Activated CD8-positive, alpha-beta memory T cell treated with anti-CD3 and anti-CD28 coated beads, Interleukin-2, amount 10 ng/mL, durations not matched to agents 7 days and 5 days (primary cell): ENCODE measurements at regions of chr7 and their contacts with region 1.

Region 1: DNA sequence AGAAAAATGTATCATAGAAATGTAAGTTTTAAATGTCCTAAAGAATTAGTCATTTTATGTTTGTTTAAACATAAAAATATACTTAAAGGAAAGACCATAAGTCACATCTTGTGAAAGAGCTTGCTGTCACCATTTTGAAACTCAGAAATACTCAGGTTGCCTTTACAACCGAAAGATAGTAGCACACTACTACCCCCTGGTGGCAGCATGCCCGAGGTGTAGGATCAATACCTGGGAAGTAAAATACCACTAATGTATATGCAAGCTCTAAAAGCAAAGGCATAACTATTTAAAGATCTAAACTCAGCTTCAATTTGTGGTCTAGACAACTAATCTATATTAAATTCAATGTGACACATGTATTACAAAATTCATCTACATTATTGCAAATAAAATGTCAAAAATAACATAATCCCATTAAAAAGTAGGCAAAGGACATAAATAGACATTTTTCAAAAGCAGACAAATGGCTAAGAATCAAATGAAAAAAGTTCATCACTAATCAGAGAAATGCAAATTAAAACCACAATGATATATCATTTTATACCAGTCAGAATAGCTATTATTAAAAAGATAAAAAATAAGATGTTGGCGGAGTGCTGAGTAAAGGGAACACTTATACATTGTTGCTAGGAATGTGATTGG is 47.7 kb upstream of the FGL2 start:
- DNase-seq: peak; percentile 94
- ATAC-seq: peak; percentile 99
- H3K4me3 Mint-ChIP-seq: no peak overlapping the region
- H3K27ac Mint-ChIP-seq: no peak overlapping the region
- H3K4me1 Mint-ChIP-seq: peaks cover 5% of the 10 kb centered on the region
- H3K27me3 Mint-ChIP-seq: peaks cover 2% of the 10 kb centered on the region

Region 2: GRCh38 chr7:77199013-77199966 is 48.0 kb before region 1 on chr7 and contains the start of gene FGL2:
- CTCF ChIA-PET with region 1: interaction called, 15 read pairs
- DNase-seq: peak; percentile 56
- ATAC-seq: peak; percentile 68
- H3K4me3 Mint-ChIP-seq: peak within 1 kb of the TSS; percentile 82
- H3K27ac Mint-ChIP-seq: peak within 1 kb of the TSS; percentile 86
- H3K4me1 Mint-ChIP-seq: peaks cover 60% of the 10 kb centered on the region
- H3K27me3 Mint-ChIP-seq: no peaks in the 10 kb centered on the region
- total RNA-seq, gene FGL2: 9.4 to 9.9 TPM

Region 3: DNA sequence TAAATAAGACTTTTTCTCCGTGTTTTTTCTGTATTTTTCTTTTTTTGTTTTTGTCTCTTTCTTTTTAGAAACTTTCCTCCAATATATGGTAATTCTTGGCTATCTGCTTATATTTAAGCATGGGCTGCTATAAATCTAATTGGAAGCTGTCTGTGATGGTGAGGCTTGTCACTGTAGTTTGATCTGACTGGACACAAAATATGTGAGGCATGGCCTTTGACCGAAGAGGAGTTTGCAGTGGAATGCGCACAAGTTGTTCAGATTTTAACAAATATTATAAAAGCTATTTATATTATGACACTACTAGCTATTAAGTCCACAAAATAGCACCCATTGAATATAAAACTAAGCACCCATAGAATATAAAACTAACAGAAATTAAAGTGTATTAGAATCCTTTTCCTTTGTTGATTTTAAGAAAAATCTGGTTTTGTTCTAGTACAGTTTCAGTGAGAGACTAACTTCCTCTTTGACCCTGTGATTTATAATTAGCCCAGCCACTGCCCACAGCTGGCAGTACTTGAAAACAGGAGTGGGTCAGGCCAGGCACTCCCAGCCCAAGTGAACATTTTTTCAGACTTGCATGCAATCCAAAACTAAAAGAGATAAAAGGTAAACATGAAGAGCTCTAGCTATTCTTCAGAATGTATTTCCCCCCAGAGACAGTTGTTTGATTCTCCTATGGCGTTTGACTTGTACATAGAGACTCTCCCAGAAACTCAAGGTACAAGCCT is 22.2 kb after region 1 on chr7:
- CTCF ChIA-PET with region 1: interaction called, 11 read pairs
- DNase-seq: no peak
- ATAC-seq: no peak
- H3K4me3 Mint-ChIP-seq: no peak overlapping the region
- H3K27ac Mint-ChIP-seq: no peak overlapping the region
- H3K4me1 Mint-ChIP-seq: peaks cover 31% of the 10 kb centered on the region
- H3K27me3 Mint-ChIP-seq: no peaks in the 10 kb centered on the region

Region 4: DNA sequence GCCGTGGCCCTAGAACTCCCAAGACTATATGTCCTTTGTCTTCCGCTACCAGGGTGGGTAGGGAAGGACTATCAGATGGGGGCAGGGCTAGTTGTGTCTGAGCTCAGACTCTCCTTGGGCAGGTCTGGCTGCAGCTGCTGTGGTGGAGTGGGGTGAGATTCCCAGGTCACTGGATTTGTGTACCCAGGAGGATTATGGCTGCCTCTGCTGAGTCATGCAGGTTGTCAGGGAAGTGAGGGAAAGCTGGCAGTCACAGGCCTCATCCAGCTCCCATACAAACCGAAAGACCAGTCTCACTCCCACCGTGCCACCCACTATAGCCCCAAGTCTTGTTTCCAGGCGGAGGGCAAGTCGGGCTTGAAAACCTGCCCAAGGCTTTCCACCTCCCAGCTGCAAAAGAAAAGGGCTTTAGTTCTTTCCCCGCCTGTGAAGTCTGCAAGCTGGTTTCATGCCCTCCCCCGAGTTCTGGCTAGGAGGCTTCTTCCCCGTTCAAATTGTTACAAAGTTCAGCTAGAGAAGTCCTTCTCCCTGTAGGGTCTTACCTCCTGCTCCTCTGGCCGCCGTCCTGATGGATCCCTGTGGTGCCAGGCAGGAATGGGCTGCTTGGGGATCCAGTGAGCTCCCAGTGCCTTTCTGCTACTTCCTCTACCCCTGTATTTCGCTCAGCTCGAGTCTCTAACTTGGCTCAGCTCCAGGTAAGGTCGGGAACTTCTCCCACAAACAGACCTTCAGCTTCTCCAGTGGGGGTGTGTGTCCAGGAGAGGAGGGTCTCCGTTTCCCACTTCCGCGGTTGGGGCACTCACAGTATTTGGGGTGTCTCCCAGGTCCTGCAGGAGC is 59.1 kb after region 1 on chr7:
- CTCF ChIA-PET with region 1: no interaction called
- DNase-seq: no peak
- ATAC-seq: no peak
- H3K4me3 Mint-ChIP-seq: no peak overlapping the region
- H3K27ac Mint-ChIP-seq: no peak overlapping the region
- H3K4me1 Mint-ChIP-seq: no peaks in the 10 kb centered on the region
- H3K27me3 Mint-ChIP-seq: no peaks in the 10 kb centered on the region

Region 5: GRCh38 chr7:77331938-77332695 is 84.8 kb after region 1 on chr7:
- CTCF ChIA-PET with region 1: interaction called, 78 read pairs
- DNase-seq: peak; percentile 75
- ATAC-seq: peak; percentile 89
- H3K4me3 Mint-ChIP-seq: no peak overlapping the region
- H3K27ac Mint-ChIP-seq: peak overlapping the region; percentile 58
- H3K4me1 Mint-ChIP-seq: peaks cover 46% of the 10 kb centered on the region
- H3K27me3 Mint-ChIP-seq: no peaks in the 10 kb centered on the region

Region 6: GRCh38 chr7:77453531-77453930 is 206.2 kb after region 1 on chr7:
- CTCF ChIA-PET with region 1: no interaction called
- DNase-seq: no peak
- ATAC-seq: no peak
- H3K4me3 Mint-ChIP-seq: no peak overlapping the region
- H3K27ac Mint-ChIP-seq: no peak overlapping the region
- H3K4me1 Mint-ChIP-seq: peaks cover 2% of the 10 kb centered on the region
- H3K27me3 Mint-ChIP-seq: peaks cover 7% of the 10 kb centered on the region